WTC11 (cell line): ENCODE measurements at regions of chr21 and their contacts with region 1.

Region 1: GRCh38 chr21:33608559-33608958 is 20.1 kb upstream of the DONSON start:
- DNase-seq: no peak
- ATAC-seq: no peak
- H3K4me3 Mint-ChIP-seq: no peak overlapping the region
- H3K27ac Mint-ChIP-seq: no peak overlapping the region
- H3K4me1 Mint-ChIP-seq: no peaks in the 10 kb centered on the region
- H3K27me3 Mint-ChIP-seq: no peaks in the 10 kb centered on the region
- CTCF ChIP-seq: no peak

Region 2: GRCh38 chr21:33531007-33531406 is 77.6 kb before region 1 on chr21:
- CTCF ChIA-PET with region 1: no interaction called
- POLR2A ChIA-PET with region 1: no interaction called
- DNase-seq: no peak
- ATAC-seq: no peak
- H3K4me3 Mint-ChIP-seq: no peak overlapping the region
- H3K27ac Mint-ChIP-seq: no peak overlapping the region
- H3K4me1 Mint-ChIP-seq: no peaks in the 10 kb centered on the region
- H3K27me3 Mint-ChIP-seq: no peaks in the 10 kb centered on the region
- CTCF ChIP-seq: no peak

Region 3: GRCh38 chr21:33557447-33557846 is 51.1 kb before region 1 on chr21:
- CTCF ChIA-PET with region 1: interaction called, 14 read pairs
- POLR2A ChIA-PET with region 1: no interaction called
- DNase-seq: no peak
- ATAC-seq: no peak
- H3K4me3 Mint-ChIP-seq: no peak overlapping the region
- H3K27ac Mint-ChIP-seq: no peak overlapping the region
- H3K4me1 Mint-ChIP-seq: no peaks in the 10 kb centered on the region
- H3K27me3 Mint-ChIP-seq: no peaks in the 10 kb centered on the region
- CTCF ChIP-seq: no peak

Region 4: DNA sequence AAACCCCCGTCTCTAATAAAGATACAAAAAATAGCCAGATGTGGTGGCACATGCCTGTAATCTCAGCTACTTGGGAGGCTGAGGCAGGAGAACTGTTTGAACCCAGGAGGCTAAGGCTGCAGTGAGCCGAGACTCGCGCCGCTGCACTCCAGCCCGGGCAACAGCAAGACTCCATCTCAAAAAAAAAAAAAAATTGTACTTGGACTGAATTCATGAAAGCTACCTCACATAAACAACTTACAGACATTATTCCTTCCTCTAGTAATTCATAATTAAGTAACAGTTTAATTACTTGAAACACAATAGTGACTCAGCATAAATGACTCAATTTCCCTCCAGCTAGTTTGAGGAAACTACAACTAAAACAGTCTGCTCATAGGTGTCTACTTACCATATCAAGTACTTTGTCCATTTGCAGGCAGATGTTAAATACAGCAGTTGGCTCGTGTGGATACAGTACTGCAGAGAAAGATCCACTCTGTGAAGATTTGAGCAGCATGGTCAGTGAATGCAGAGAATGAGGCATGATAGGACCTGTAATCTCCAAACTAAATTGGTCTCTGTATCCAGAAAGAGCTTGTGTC is 29.5 kb before region 1 on chr21:
- CTCF ChIA-PET with region 1: interaction called, 23 read pairs
- POLR2A ChIA-PET with region 1: no interaction called
- DNase-seq: no peak
- ATAC-seq: no peak
- H3K4me3 Mint-ChIP-seq: no peak overlapping the region
- H3K27ac Mint-ChIP-seq: peak overlapping the region; percentile 88
- H3K4me1 Mint-ChIP-seq: no peaks in the 10 kb centered on the region
- H3K27me3 Mint-ChIP-seq: no peaks in the 10 kb centered on the region
- CTCF ChIP-seq: no peak

Region 5: GRCh38 chr21:33588485-33589335 is 19.8 kb before region 1 on chr21 and contains the start of gene DONSON:
- CTCF ChIA-PET with region 1: interaction called, 94 read pairs
- POLR2A ChIA-PET with region 1: interaction called, 12 read pairs
- DNase-seq: peak; percentile 87
- ATAC-seq: peak; percentile 94
- H3K4me3 Mint-ChIP-seq: peak within 1 kb of the TSS; percentile 85
- H3K27ac Mint-ChIP-seq: peak within 1 kb of the TSS; percentile 62
- H3K4me1 Mint-ChIP-seq: peaks cover 23% of the 10 kb centered on the region
- H3K27me3 Mint-ChIP-seq: no peaks in the 10 kb centered on the region
- CTCF ChIP-seq: no peak
- total RNA-seq, gene DONSON: 27.5 to 32.2 TPM (median 29.6 TPM) in 3 replicates

Region 6: DNA sequence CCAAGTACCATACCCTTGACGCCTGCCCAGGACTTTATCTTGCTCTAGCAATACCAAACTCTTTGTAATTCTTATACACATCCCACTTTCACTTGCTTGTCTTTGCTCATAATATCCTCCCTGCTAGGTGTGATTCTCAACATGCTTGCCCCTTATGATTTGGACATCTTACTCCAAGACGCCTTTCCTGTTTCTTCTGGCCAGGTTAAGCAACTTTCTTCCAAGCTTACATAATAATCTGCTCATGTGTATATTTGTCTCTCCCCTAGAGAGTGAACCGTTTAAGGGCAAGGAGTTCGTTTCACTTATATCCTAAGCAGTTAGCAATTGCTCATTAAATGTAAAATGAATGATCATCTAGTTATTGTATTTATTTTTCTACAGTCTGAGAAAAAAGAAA is 11.2 kb after region 1 on chr21:
- CTCF ChIA-PET with region 1: interaction called, 15 read pairs
- POLR2A ChIA-PET with region 1: interaction called, 5 read pairs
- DNase-seq: no peak
- ATAC-seq: no peak
- H3K4me3 Mint-ChIP-seq: no peak overlapping the region
- H3K27ac Mint-ChIP-seq: no peak overlapping the region
- H3K4me1 Mint-ChIP-seq: peaks cover 16% of the 10 kb centered on the region
- H3K27me3 Mint-ChIP-seq: no peaks in the 10 kb centered on the region
- CTCF ChIP-seq: no peak

Region 7: GRCh38 chr21:33775100-33775828 is 166.7 kb after region 1 on chr21:
- CTCF ChIA-PET with region 1: no interaction called
- POLR2A ChIA-PET with region 1: no interaction called
- DNase-seq: no peak
- ATAC-seq: no peak
- H3K4me3 Mint-ChIP-seq: no peak overlapping the region
- H3K27ac Mint-ChIP-seq: peak overlapping the region; percentile 6; the same call in 1 of the 2 replicates
- H3K4me1 Mint-ChIP-seq: no peaks in the 10 kb centered on the region
- H3K27me3 Mint-ChIP-seq: no peaks in the 10 kb centered on the region
- CTCF ChIP-seq: no peak

Region 8: DNA sequence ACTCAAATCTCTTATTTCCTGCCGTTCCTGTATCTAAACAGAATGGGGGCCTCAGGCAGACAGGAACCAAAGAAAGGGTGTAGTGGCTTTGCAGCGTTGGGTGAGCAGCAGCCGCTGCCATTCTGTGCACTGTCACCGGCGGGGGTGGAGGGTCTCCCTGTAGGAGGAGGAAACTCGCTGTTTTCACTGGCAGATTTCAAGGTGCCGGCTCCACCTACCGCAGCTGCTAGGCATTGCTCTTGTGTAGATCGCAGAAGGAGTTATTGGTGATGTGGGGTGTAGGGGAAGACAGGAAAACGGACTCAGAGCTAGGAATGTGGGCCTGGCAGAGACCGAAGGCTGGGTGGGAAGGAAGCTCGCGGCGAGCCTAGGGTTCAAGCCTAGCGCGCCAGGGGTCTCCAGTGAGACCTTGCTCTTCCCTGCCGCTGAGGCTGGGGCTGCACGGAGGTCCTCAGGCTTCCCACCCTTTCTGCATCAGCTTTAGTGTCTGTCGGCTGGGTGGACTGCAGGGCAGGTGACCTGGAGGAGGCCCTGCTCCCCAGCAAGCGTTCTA is 286.3 kb after region 1 on chr21:
- CTCF ChIA-PET with region 1: interaction called, 13 read pairs
- POLR2A ChIA-PET with region 1: no interaction called
- DNase-seq: peak; percentile 84
- ATAC-seq: peak; percentile 88
- H3K4me3 Mint-ChIP-seq: peak overlapping the region; percentile 51
- H3K27ac Mint-ChIP-seq: peak overlapping the region; percentile 34; the same call in 1 of the 2 replicates
- H3K4me1 Mint-ChIP-seq: peaks cover 21% of the 10 kb centered on the region
- H3K27me3 Mint-ChIP-seq: 0 out of 2 replicates have a peak, but pooled peaks cover 6% of the 10 kb centered on the region
- CTCF ChIP-seq: no peak; the same call in 1 of the 2 replicates